Lower leg skin (tissue), 4 donors: ENCODE measurements at regions of chr10 and their contacts with region 1.

Region 1: GRCh38 chr10:116990262-116990800 is 14.7 kb downstream of the SHTN1 start:
- DNase-seq: no peak
- H3K4me3 ChIP-seq: no peak overlapping the region
- CTCF ChIP-seq: no peak
- POLR2A ChIP-seq: no peak

Region 2: GRCh38 chr10:116748041-116748440 is 242.3 kb before region 1 on chr10:
- intact Hi-C with region 1: loop called (anchors 5 kb)
- DNase-seq: no peak
- H3K4me3 ChIP-seq: no peak overlapping the region
- CTCF ChIP-seq: no peak
- POLR2A ChIP-seq: no peak

Region 3: GRCh38 chr10:117375360-117376178 is 385.2 kb after region 1 on chr10 and contains the start of gene PDZD8:
- intact Hi-C with region 1: no loop called
- DNase-seq: peak; percentile 90 to 98
- H3K4me3 ChIP-seq: peak within 1 kb of the TSS; percentile 54
- CTCF ChIP-seq: no peak
- POLR2A ChIP-seq: peak in 1 of 2 donors; percentile 39
- total RNA-seq, gene PDZD8: 20.6 to 29.4 (median 27.8) TPM